ENCODE measurements at regions of chr4 and their contacts with region 1.

Region 1: DNA sequence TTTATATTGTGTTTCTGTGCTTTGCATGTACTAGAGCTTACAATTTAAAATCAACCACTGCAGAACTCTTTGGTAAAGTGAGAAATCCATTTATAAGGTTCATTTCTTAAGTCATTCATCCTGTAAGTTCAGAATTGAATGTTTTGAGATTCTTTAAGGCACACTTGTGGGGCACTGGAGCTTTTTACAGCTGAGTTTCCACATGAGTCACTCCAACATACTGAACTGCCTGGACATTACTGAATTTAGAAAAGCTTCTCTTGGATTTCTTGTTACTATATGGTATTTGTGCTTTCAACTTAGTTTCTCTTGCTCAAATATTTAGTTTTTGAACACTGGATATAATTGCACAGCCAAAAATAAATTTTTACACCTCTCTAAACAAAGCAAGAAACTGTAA is 226.3 kb downstream of the PACRGL start:
- DNase-seq: no peak
- H3K4me3 ChIP-seq: no peak overlapping the region
- CTCF ChIP-seq: no peak

Region 2: DNA sequence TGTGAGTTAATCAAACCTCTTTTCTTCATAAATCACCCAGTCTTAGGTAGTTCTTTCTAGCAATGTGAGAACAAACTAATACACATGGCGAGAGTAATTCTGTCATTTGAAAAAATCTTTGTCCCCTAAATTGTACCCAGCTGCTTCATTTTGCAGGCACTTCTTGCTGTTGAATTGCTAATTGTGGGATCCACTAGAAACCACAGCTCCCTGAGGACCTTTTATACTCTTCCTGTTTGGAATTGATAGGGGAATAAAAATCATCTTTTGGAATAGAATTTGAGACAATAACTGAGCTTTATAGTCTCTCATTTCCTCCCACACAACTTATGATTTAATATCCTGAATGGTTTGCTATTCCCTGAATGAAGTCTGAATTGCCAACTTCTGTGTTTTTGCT is 56.1 kb before region 1 on chr4:
- in situ Hi-C with region 1: loop called (anchors 5 kb)
- DNase-seq: no peak
- H3K4me3 ChIP-seq: no peak overlapping the region
- CTCF ChIP-seq: no peak

Region 3: DNA sequence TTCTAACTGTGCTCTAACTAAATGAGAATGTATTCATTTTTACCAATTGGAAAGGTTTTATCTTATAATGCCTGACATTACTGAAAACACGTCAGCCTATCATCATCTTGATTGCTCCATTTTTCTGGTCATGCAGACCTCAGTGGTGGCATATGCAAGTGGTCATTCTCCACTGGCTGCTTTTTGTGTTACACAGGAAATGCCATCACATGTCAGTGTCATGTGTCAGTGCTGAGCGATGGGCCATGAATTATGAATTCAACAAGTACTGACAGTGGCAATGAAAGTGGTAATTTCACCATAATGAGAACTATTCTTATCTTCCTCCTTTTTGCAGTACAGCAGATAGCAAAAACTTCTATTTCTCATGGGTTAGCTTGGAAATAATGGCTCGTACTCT is 35.8 kb before region 1 on chr4:
- in situ Hi-C with region 1: no loop called
- DNase-seq: no peak
- H3K4me3 ChIP-seq: no peak overlapping the region
- CTCF ChIP-seq: no peak